Activated CD4-positive, alpha-beta memory T cell treated with anti-CD3 and anti-CD28 coated beads for 36 hours (primary cell): ENCODE measurements at regions of chr21 and their contacts with region 1.

Region 1: GRCh38 chr21:25385911-25386474 is 221.3 kb downstream of the MRPL39 start:
- DNase-seq: no peak
- H3K4me3 Mint-ChIP-seq: no peak overlapping the region
- H3K27ac Mint-ChIP-seq: no peak overlapping the region
- H3K4me1 Mint-ChIP-seq: peaks cover 5% of the 10 kb centered on the region
- H3K27me3 Mint-ChIP-seq: peaks cover 1% of the 10 kb centered on the region

Region 2: GRCh38 chr21:24895885-24896734 is 489.9 kb before region 1 on chr21:
- CTCF ChIA-PET with region 1: interaction called, 6 read pairs
- POLR2A ChIA-PET with region 1: no interaction called
- intact Hi-C with region 1: loop called (anchors 10 kb)
- DNase-seq: no peak
- H3K4me3 Mint-ChIP-seq: no peak overlapping the region
- H3K27ac Mint-ChIP-seq: no peak overlapping the region
- H3K4me1 Mint-ChIP-seq: no peaks in the 10 kb centered on the region
- H3K27me3 Mint-ChIP-seq: no peaks in the 10 kb centered on the region

Region 3: DNA sequence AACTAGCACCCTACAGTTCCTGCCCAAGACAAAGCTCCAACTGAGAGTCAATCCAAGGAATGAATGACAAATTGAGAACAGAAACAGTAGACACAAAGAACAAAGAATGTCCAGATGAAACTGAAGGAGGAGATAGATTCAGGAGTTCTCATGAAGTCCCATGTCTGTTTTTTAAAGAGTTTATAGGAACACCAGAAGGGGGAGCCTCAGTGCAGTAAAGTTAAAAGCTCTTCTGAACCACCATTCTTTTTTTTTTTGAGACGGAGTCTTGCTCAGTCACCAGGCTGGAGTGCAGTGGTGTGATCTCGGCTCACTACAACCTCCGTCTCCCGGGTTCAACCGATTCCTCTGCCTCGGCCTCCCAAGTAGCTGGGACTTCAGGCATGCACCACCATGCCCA is 102.3 kb before region 1 on chr21:
- CTCF ChIA-PET with region 1: interaction called, 53 read pairs
- POLR2A ChIA-PET with region 1: no interaction called
- intact Hi-C with region 1: loop called (anchors 2 kb)
- DNase-seq: no peak
- H3K4me3 Mint-ChIP-seq: no peak overlapping the region
- H3K27ac Mint-ChIP-seq: no peak overlapping the region
- H3K4me1 Mint-ChIP-seq: no peaks in the 10 kb centered on the region
- H3K27me3 Mint-ChIP-seq: peaks cover 5% of the 10 kb centered on the region

Region 4: GRCh38 chr21:25350056-25350455 is 35.9 kb before region 1 on chr21:
- CTCF ChIA-PET with region 1: interaction called, 47 read pairs
- POLR2A ChIA-PET with region 1: no interaction called
- intact Hi-C with region 1: loop called (anchors 1 kb)
- DNase-seq: peak; percentile 61
- H3K4me3 Mint-ChIP-seq: no peak overlapping the region
- H3K27ac Mint-ChIP-seq: no peak overlapping the region
- H3K4me1 Mint-ChIP-seq: peaks cover 5% of the 10 kb centered on the region
- H3K27me3 Mint-ChIP-seq: peaks cover 14% of the 10 kb centered on the region

Region 5: GRCh38 chr21:25370311-25370744 is 15.7 kb before region 1 on chr21:
- CTCF ChIA-PET with region 1: interaction called, 12 read pairs
- POLR2A ChIA-PET with region 1: no interaction called
- intact Hi-C with region 1: no loop called
- DNase-seq: peak; percentile 58
- H3K4me3 Mint-ChIP-seq: no peak overlapping the region
- H3K27ac Mint-ChIP-seq: no peak overlapping the region
- H3K4me1 Mint-ChIP-seq: peaks cover 12% of the 10 kb centered on the region
- H3K27me3 Mint-ChIP-seq: peaks cover 6% of the 10 kb centered on the region

Region 6: DNA sequence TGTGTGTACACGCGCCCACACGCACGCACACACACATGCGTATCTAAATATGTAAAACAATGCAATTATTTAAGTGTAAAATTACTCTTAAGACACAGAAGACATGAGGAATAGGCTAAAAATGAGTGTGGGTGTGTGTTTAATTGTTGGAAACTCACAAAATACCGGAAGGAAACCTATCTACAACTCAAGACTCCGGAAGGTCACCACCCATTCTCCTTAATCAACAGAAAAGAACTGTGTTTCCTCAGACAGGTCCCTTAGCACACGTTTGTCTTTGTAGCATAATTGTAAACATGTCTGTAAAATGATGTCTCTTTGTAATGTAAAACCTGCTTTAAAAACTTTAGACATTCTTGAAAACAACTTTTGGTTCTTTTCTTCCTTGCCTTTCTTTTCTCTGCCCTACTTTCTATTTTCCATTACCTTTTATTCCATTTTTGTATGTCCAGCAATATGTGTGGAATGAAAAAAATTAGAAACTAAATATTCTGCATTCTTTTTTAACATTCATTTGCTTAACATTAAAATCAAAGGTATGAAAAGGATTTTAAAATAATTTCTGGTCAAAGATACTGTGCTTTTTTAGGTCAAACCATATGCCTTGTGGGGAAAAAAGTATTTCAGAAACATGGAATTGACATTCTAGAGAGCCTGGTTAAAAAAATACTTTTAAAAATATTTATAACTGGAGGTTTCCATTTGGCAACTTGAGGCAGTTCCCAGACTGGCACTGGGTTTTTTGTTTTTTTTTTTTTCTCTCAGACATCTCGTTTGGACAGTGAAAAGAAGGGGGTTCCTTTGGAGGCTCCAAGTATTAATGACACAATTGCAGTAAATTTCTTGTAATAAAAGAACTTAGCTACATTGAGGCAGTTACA is 302.5 kb after region 1 on chr21:
- CTCF ChIA-PET with region 1: no interaction called
- POLR2A ChIA-PET with region 1: no interaction called
- intact Hi-C with region 1: no loop called
- DNase-seq: no peak
- H3K4me3 Mint-ChIP-seq: no peak overlapping the region
- H3K27ac Mint-ChIP-seq: no peak overlapping the region
- H3K4me1 Mint-ChIP-seq: no peaks in the 10 kb centered on the region
- H3K27me3 Mint-ChIP-seq: peaks cover 3% of the 10 kb centered on the region